GM12878 (cell line): ENCODE measurements at regions of chr18 and their contacts with region 1.

Region 1: GRCh38 chr18:2104620-2105462 is 466.5 kb downstream of the METTL4 start:
- DNase-seq: no peak
- ATAC-seq: peak; percentile 97
- H3K4me3 ChIP-seq: no peak overlapping the region
- H3K27ac ChIP-seq: no peak overlapping the region
- H3K4me1 ChIP-seq: no peaks in the 10 kb centered on the region
- H3K27me3 ChIP-seq: no peaks in the 10 kb centered on the region
- CTCF ChIP-seq: peak; percentile 67 to 81 (median 70)
- EP300 ChIP-seq: no peak
- POLR2A ChIP-seq: no peak
- RAD21 ChIP-seq: peak; percentile 39

Region 2: DNA sequence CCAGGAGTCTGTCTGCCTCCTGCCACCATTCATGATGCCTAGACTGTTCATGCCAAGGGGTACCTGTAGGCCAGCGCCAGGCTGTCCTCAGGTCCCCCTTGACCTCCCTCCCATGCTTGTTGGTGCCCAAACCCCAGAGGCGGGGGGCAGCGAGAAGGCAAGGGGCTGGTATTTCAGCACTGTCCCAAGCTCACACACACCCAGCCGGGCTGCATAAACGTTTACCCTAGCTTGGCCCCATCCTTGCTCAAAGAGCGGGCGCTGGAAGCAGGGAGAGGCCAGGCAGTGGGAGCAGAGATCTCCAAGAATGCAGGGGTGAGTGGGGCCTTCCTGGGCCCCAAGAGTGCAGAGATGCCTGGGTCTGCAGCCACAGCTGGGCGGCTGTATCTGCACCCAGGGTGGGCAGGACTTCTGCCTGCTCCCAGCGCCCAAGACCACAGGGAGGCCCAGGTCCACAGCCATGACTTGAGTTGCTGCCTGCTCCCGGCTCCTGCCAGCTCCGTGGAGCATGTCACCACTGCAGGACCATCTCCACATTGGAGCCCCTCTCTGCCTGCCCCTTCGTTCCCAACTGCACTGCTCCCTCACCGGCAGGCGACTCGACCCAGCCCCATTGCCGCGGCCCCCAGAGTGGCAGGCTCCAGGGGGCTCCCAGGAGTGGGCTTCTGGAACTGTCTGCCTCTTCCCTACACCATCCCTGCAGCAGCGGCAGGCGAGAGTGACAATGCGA is 150.1 kb before region 1 on chr18:
- CTCF ChIA-PET with region 1: no interaction called
- POLR2A ChIA-PET with region 1: no interaction called
- RAD21 ChIA-PET with region 1: no interaction called
- SMC1A ChIA-PET with region 1: no interaction called
- in situ Hi-C with region 1: no loop called
- intact Hi-C with region 1: no loop called
- DNase-seq: no peak
- ATAC-seq: no peak
- H3K4me3 ChIP-seq: no peak overlapping the region
- H3K27ac ChIP-seq: no peak overlapping the region
- H3K4me1 ChIP-seq: no peaks in the 10 kb centered on the region
- H3K27me3 ChIP-seq: no peaks in the 10 kb centered on the region
- CTCF ChIP-seq: no peak
- EP300 ChIP-seq: no peak
- POLR2A ChIP-seq: no peak
- RAD21 ChIP-seq: no peak

Region 3: DNA sequence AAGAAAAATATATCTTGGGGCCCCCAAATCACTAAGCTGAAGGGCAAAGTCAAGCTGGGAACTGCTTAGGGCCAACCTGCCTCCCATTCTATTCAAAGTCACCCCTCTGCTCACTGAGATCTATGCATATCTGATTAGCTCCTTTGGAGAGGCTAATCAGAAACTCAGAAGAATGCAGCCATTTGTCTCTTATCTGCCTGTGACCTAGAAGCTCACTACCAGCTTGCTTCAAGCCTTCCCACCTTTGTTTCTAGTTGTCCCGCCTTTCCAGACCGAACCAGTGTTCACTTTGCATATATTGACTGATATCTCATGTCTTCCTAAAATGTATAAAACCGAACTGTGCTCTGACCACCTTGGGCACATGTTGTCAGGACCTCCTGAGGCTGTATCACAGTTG is 12.9 kb before region 1 on chr18:
- CTCF ChIA-PET with region 1: interaction called, 37 read pairs
- POLR2A ChIA-PET with region 1: no interaction called
- RAD21 ChIA-PET with region 1: interaction called, 5 read pairs
- SMC1A ChIA-PET with region 1: interaction called, 7 read pairs
- in situ Hi-C with region 1: no loop called
- intact Hi-C with region 1: no loop called
- DNase-seq: no peak
- ATAC-seq: no peak
- H3K4me3 ChIP-seq: no peak overlapping the region
- H3K27ac ChIP-seq: no peak overlapping the region
- H3K4me1 ChIP-seq: no peaks in the 10 kb centered on the region
- H3K27me3 ChIP-seq: no peaks in the 10 kb centered on the region; a peak in 1 of 4 replicates
- CTCF ChIP-seq: no peak
- EP300 ChIP-seq: no peak
- POLR2A ChIP-seq: no peak
- RAD21 ChIP-seq: no peak

Region 4: DNA sequence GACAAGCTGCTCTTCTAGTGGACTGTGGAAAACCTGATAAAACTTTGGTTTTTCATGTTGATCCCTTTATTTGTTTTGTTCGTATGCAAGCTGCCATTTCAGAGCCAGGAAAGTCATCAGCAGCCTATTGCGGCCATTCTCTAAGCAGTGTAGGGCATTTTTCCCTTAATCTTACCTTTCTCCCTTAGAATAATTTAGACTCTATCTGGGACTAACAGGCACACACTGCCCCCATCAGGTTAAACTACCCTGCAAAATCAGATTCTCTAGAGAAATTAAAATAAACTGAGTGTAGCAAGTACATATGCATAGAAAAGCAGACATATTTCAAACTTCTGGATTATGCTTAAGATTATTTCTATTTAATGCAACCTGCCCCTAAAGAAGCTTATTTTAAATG is 119.0 kb after region 1 on chr18:
- CTCF ChIA-PET with region 1: interaction called, 11 read pairs
- POLR2A ChIA-PET with region 1: no interaction called
- RAD21 ChIA-PET with region 1: interaction called, 6 read pairs
- SMC1A ChIA-PET with region 1: interaction called, 4 read pairs
- in situ Hi-C with region 1: no loop called
- intact Hi-C with region 1: loop called (anchors 5 kb)
- DNase-seq: no peak
- ATAC-seq: no peak
- H3K4me3 ChIP-seq: no peak overlapping the region
- H3K27ac ChIP-seq: no peak overlapping the region
- H3K4me1 ChIP-seq: no peaks in the 10 kb centered on the region
- H3K27me3 ChIP-seq: no peaks in the 10 kb centered on the region
- CTCF ChIP-seq: peak; percentile 25 to 35 (median 31); a peak in 3 of 6 replicates
- EP300 ChIP-seq: no peak
- POLR2A ChIP-seq: no peak
- RAD21 ChIP-seq: peak; percentile 42; the same call in 1 of the 2 replicates

Region 5: DNA sequence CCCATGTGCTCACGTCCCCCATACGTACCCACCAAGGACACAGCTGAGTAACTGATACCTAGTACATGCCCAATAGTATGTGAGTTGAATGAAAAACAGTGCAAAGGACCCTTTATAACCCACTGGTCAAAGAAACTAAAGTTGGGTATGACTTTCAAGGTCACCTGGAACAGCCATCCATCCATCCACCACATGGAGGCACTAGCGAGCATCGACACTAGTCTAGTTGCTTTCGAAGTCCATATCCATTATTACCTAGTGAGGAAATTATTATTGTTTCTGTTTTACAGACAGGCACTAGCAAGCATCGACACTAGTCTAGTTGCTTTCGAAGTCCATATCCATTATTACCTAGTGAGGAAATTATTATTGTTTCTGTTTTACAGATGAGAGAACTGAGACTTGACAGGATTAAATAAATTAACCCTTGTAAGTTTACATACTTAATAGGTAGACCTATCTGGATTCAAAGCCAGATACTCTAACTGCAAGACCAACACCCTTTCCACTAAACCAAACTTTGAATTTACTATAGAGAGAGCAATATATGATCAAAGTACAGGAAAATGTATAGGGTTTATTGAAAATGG is 232.8 kb after region 1 on chr18:
- CTCF ChIA-PET with region 1: interaction called, 8 read pairs
- POLR2A ChIA-PET with region 1: no interaction called
- RAD21 ChIA-PET with region 1: interaction called, 3 read pairs
- SMC1A ChIA-PET with region 1: interaction called, 3 read pairs
- in situ Hi-C with region 1: no loop called
- intact Hi-C with region 1: loop called (anchors 10 kb)
- DNase-seq: no peak
- ATAC-seq: peak; percentile 95
- H3K4me3 ChIP-seq: no peak overlapping the region
- H3K27ac ChIP-seq: no peak overlapping the region
- H3K4me1 ChIP-seq: no peaks in the 10 kb centered on the region
- H3K27me3 ChIP-seq: no peaks in the 10 kb centered on the region
- CTCF ChIP-seq: peak; percentile 54 to 74 (median 68)
- EP300 ChIP-seq: no peak
- POLR2A ChIP-seq: no peak
- RAD21 ChIP-seq: peak; percentile 50; the same call in 1 of the 2 replicates

Region 6: DNA sequence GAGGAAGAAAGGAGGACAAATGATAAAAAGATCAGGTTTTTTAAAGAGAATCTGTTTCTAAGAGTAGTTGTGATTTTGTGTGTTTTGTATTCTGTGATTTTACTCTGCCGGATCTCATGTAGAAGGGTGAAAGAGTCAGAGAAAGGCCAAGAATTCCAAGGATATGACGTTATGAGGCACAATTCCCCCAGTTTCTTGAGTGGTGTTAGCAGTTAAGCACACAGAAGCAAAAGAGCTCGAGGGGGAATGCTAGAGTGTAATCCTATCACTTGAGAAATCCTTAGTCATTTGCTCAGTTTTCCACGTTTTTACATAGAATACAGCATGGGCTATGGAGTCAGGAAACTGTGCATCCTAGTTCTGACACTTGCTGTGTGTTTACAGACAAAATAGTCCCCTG is 431.7 kb after region 1 on chr18:
- CTCF ChIA-PET with region 1: interaction called, 124 read pairs
- POLR2A ChIA-PET with region 1: no interaction called
- RAD21 ChIA-PET with region 1: interaction called, 69 read pairs
- SMC1A ChIA-PET with region 1: interaction called, 112 read pairs
- in situ Hi-C with region 1: no loop called
- intact Hi-C with region 1: no loop called
- DNase-seq: no peak
- ATAC-seq: no peak
- H3K4me3 ChIP-seq: no peak overlapping the region
- H3K27ac ChIP-seq: no peak overlapping the region
- H3K4me1 ChIP-seq: no peaks in the 10 kb centered on the region
- H3K27me3 ChIP-seq: no peaks in the 10 kb centered on the region
- CTCF ChIP-seq: no peak
- EP300 ChIP-seq: no peak
- POLR2A ChIP-seq: no peak
- RAD21 ChIP-seq: no peak